Activated naive CD4-positive, alpha-beta T cell treated with anti-CD3 and anti-CD28 coated beads for 36 hours (primary cell): ENCODE measurements at regions of chr12 and their contacts with region 1.

Region 1: GRCh38 chr12:64550755-64551154 is 59.5 kb upstream of the RASSF3 start:
- DNase-seq: no peak
- H3K4me3 Mint-ChIP-seq: no peak overlapping the region
- H3K27ac Mint-ChIP-seq: no peak overlapping the region
- H3K4me1 Mint-ChIP-seq: peaks cover 7% of the 10 kb centered on the region
- H3K27me3 Mint-ChIP-seq: no peaks in the 10 kb centered on the region

Region 2: GRCh38 chr12:64571411-64571810 is 20.7 kb after region 1 on chr12:
- CTCF ChIA-PET with region 1: interaction called, 12 read pairs
- intact Hi-C with region 1: no loop called
- DNase-seq: peak; percentile 9
- H3K4me3 Mint-ChIP-seq: no peak overlapping the region
- H3K27ac Mint-ChIP-seq: no peak overlapping the region
- H3K4me1 Mint-ChIP-seq: peaks cover 31% of the 10 kb centered on the region
- H3K27me3 Mint-ChIP-seq: no peaks in the 10 kb centered on the region

Region 3: DNA sequence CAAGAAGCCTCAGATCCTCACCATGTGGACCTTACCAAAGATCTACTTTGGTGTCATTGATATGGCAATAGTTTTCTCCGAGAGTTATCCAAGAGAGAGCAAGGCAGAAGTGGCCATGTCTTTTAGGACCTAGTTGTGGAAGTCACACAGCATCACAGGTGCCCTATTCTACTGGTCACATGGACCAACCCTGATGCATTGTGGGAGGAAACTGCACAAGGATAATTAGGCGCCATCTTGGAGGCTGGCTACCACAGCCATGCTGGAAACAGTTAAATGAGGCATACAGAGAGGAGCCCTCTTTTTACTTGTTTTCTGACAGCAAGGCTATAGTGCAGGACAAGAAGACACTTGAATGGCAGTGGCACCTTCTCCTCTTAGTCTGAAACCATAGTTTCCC is 158.7 kb after region 1 on chr12:
- CTCF ChIA-PET with region 1: interaction called, 46 read pairs
- intact Hi-C with region 1: no loop called
- DNase-seq: no peak
- H3K4me3 Mint-ChIP-seq: no peak overlapping the region
- H3K27ac Mint-ChIP-seq: no peak overlapping the region
- H3K4me1 Mint-ChIP-seq: peaks cover 6% of the 10 kb centered on the region
- H3K27me3 Mint-ChIP-seq: no peaks in the 10 kb centered on the region

Region 4: GRCh38 chr12:64718649-64719048 is 167.9 kb after region 1 on chr12:
- CTCF ChIA-PET with region 1: interaction called, 6 read pairs
- intact Hi-C with region 1: loop called (anchors 1 kb)
- DNase-seq: no peak
- H3K4me3 Mint-ChIP-seq: no peak overlapping the region
- H3K27ac Mint-ChIP-seq: no peak overlapping the region
- H3K4me1 Mint-ChIP-seq: peaks cover 18% of the 10 kb centered on the region
- H3K27me3 Mint-ChIP-seq: no peaks in the 10 kb centered on the region

Region 5: GRCh38 chr12:64759035-64759901 is 208.5 kb after region 1 on chr12 and contains the start of gene GNS:
- CTCF ChIA-PET with region 1: interaction called, 15 read pairs
- intact Hi-C with region 1: loop called (anchors 1 kb)
- DNase-seq: peak; percentile 98
- H3K4me3 Mint-ChIP-seq: peak within 1 kb of the TSS; percentile 83
- H3K27ac Mint-ChIP-seq: peak within 1 kb of the TSS; percentile 85
- H3K4me1 Mint-ChIP-seq: peaks cover 41% of the 10 kb centered on the region
- H3K27me3 Mint-ChIP-seq: no peaks in the 10 kb centered on the region
- total RNA-seq, gene GNS: 14.3 to 14.6 TPM

Region 6: GRCh38 chr12:64780531-64781279 is 229.9 kb after region 1 on chr12:
- CTCF ChIA-PET with region 1: interaction called, 10 read pairs
- intact Hi-C with region 1: no loop called
- DNase-seq: peak; percentile 21
- H3K4me3 Mint-ChIP-seq: peak overlapping the region; percentile 74
- H3K27ac Mint-ChIP-seq: no peak overlapping the region
- H3K4me1 Mint-ChIP-seq: peaks cover 12% of the 10 kb centered on the region
- H3K27me3 Mint-ChIP-seq: peaks cover 65% of the 10 kb centered on the region